ENCODE measurements at regions of chr2 and their contacts with region 1.

Region 1: GRCh38 chr2:203814661-203815540 is 52.7 kb upstream of the CTLA4 start:
- DNase-seq: no peak

Region 2: DNA sequence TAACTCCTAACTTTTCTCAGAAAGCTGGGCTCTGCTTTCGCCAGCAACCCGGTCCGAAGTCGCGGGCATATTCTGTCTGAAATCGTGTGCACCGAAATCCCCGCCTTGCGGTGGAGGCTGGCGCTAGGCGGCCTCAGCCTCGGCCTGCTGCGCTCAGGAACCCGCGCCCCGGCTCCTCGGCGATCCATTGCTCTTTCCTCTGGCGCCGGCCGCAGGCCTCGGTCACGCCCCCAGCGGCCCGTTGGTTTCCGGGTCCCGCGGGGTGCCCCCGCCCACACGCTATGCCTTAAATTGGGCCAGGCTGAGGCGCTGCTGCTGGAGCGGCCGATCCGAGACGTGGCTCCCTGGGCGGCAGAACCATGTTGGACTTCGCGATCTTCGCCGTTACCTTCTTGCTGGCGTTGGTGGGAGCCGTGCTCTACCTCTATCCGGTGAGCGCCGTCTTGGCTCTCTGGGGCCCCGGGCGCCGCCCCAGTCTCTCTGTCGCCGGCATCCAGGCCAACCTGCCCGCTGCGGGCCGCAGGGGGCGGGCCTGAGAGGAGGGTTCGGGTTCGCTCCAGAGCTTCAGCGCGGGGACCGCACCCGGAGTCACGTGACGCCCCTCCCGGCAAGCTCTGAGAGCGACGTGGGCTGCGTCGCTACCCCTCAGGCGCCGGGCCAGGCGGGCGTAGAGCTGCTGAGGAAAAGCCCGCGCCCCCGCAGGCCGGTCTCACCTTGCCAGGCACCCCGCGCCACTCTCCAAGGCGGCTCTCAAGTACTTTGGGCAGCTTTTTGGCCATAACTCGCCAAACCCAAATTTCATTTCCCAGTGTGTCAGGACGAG is 576.0 kb before region 1 on chr2 and contains the start of gene CYP20A1:
- intact Hi-C with region 1: loop called (anchors 5 kb)
- DNase-seq: peak; percentile 98
- total RNA-seq, gene CYP20A1: 13.1 TPM

Region 3: DNA sequence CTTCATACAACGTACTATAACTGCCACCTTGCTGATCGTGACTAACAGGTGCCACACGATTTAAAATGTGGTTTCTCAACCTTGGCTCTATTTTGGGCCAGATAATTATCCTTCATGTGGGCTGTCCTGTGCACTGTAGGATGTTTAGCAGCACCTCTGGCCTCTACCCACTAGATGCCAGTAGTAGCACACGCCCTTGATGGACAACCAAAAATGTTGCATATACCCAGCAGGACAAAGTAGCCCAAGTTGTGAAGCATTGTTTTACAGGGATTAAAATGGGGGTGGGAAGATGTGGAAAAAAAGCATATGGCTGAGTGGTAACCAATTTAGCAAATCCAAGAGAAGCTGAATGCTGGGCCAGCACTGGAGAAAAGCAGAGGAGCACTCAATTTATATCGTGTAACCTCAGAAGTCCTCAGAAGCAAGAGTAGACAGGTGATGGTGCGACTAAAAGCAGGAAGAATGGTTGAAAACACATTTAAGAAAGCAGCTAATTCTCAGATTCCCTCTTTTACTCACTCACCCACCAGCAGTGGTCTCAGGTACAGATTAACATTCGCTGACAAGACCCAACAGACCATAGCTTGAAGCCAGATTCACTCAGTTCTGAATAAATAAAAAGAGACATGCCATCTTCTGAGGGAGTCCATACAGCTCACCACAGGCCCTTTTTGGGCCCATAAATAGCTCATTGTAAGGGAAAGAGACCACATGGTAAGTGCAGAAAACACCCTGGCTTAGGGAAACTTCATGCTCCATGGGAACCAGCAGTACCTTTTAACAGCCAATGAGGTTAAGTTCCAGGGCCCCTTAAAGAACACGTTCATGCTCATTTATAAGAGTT is 330.4 kb before region 1 on chr2:
- intact Hi-C with region 1: loop called (anchors 2 kb)
- DNase-seq: no peak

Region 4: GRCh38 chr2:203535078-203535783 is 279.7 kb before region 1 on chr2 and contains the start of gene RAPH1:
- intact Hi-C with region 1: loop called (anchors 1 kb)
- DNase-seq: peak; percentile 89
- total RNA-seq, gene RAPH1: 20.6 TPM

Region 5: DNA sequence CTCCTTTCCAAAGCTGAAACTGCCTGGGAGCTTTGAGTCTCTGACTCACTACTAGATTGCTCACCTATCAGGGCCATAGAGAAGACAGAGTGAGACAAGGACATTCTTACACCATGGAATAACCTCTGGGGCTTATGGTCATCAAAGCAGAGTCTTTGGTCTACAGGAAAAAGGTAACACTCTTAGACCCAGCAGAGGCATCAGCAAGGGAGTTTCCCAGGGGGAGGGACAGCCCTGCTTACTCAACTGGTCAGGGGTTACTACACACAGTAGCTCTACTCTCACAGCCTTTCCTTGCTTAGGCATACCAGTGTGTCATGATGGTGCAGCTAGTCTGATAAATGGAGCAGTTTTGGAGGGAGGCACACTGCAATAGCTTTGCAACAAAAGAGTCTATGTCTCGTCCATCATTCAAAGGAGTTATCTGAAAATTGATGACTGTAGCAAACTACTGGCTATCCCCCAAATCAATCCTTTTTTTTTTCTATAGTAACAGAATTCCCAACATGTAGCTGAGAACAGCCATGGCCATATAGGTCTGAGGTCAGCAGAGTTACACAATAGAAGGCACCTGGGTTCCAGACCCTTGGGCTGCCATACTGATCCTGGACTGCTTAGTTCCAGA is 130.9 kb before region 1 on chr2:
- intact Hi-C with region 1: loop called (anchors 5 kb)
- DNase-seq: no peak

Region 6: GRCh38 chr2:203909261-203909967 is 94.5 kb after region 1 on chr2:
- intact Hi-C with region 1: loop called (anchors 5 kb)
- DNase-seq: no peak